Caco-2 (cell line): ENCODE measurements at regions of chr1 and their contacts with region 1.

Region 1: GRCh38 chr1:151399890-151400495 is 620 bp downstream of the PSMB4 start:
- DNase-seq: no peak
- H3K4me3 ChIP-seq: peak overlapping the region; percentile 80
- H3K4me3 Mint-ChIP-seq: peak overlapping the region; percentile 99
- H3K27ac Mint-ChIP-seq: peak overlapping the region; percentile 99
- H3K4me1 ChIP-seq: peaks cover 7% of the 10 kb centered on the region
- H3K4me1 Mint-ChIP-seq: peaks cover 13% of the 10 kb centered on the region
- H3K27me3 ChIP-seq: no peaks in the 10 kb centered on the region
- H3K27me3 Mint-ChIP-seq: no peaks in the 10 kb centered on the region
- CTCF ChIP-seq: no peak

Region 2: GRCh38 chr1:151175910-151176309 is 224.1 kb before region 1 on chr1 and contains the start of gene TMOD4:
- CTCF ChIA-PET with region 1: no interaction called
- POLR2A ChIA-PET with region 1: no interaction called
- intact Hi-C with region 1: no loop called
- DNase-seq: peak in 1 of 2 experiments; percentile 13
- H3K4me3 ChIP-seq: no peak within 1 kb of the TSS
- H3K4me3 Mint-ChIP-seq: no peak within 1 kb of the TSS
- H3K27ac Mint-ChIP-seq: no peak within 1 kb of the TSS
- H3K4me1 ChIP-seq: no peaks in the 10 kb centered on the region
- H3K4me1 Mint-ChIP-seq: no peaks in the 10 kb centered on the region
- H3K27me3 ChIP-seq: no peaks in the 10 kb centered on the region
- H3K27me3 Mint-ChIP-seq: no peaks in the 10 kb centered on the region
- CTCF ChIP-seq: peak; percentile 57 to 67
- total RNA-seq, gene TMOD4: 0.84 and 1.3 TPM in 2 replicates

Region 3: DNA sequence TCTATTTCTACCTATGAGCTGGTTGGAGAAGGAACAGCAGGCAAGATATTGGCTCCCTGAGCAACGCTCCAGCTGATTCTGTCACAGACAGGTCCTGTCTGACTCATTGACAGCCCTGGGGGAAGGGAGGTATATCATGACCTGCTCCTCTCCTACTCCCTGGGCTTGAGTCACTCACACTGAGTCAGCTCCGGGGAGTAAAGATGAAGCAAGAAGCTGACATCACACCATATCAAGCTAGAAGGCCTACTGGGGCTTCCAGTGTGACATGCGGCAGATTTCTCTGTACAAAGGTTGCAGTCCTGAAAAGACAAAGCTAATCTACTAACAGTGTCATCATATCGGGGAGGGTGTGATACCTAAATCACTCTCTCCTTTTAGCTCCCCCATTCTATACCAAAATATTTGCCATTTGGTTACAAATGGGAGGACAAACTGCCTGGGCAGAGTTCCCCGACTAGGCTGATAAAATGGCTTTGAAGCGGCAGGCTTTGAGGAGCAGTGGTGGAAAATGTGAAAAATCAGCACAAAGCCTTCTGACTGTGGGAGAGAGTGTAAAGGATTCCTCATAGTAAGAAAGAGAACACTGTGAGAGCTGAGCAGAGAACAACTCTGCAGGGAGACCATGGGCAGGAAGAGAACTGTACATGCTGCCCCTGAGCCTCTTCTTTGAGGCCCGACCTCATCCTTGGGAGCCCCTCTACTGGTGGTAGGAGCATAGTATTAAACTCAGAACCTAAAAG is 88.2 kb before region 1 on chr1:
- CTCF ChIA-PET with region 1: no interaction called
- POLR2A ChIA-PET with region 1: interaction called, 3 read pairs
- intact Hi-C with region 1: loop called (anchors 10 kb)
- DNase-seq: peak; percentile 83 to 89
- H3K4me3 ChIP-seq: no peak overlapping the region
- H3K4me3 Mint-ChIP-seq: no peak overlapping the region
- H3K27ac Mint-ChIP-seq: peak overlapping the region; percentile 78
- H3K4me1 ChIP-seq: peaks cover 67% of the 10 kb centered on the region
- H3K4me1 Mint-ChIP-seq: peaks cover 43% of the 10 kb centered on the region
- H3K27me3 ChIP-seq: no peaks in the 10 kb centered on the region
- H3K27me3 Mint-ChIP-seq: no peaks in the 10 kb centered on the region
- CTCF ChIP-seq: no peak

Region 4: DNA sequence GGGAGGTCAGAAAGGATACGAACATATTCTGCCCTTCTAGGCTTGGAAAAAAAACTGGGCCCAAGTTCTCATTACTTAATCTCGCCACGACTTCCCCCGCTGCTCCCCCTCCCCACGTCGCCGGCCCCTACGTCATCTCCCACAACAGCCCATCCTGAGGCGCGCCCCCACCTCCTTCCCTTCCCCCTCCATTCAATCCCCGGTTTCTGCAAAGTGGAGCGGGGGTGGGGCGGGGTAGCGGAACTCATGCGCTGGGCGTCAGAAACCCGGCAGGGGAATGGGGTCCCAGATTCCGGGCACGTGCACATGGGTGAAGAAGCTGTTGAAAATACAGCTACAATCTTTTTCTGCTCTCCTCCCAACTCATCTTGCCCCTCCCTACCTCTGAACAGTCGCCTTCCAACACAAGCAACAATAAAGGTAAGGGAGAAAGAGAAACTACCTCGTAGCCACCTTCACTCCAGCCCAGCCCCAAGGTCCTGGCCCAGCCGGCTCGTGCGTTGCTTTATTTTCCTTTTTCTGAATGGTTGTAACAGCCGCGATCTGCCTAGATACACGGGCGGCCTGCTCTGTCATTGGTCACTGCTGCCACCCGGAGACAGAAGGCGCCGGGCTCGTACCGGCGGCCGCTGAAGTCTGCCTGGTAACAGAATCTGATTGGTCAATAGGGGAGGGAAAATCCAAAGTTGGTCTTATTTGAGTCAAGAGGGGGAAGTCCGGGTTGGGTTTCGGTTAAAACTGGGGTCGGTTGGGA is 53.0 kb before region 1 on chr1 and contains the start of gene RFX5:
- CTCF ChIA-PET with region 1: no interaction called
- POLR2A ChIA-PET with region 1: no interaction called
- intact Hi-C with region 1: loop called (anchors 10 kb)
- DNase-seq: peak; percentile 94 to 96
- H3K4me3 ChIP-seq: peak within 1 kb of the TSS; percentile 45
- H3K4me3 Mint-ChIP-seq: peak within 1 kb of the TSS; percentile 93
- H3K27ac Mint-ChIP-seq: peak within 1 kb of the TSS; percentile 95
- H3K4me1 ChIP-seq: peaks cover 6% of the 10 kb centered on the region; the same call in 1 of the 2 replicates
- H3K4me1 Mint-ChIP-seq: peaks cover 18% of the 10 kb centered on the region
- H3K27me3 ChIP-seq: no peaks in the 10 kb centered on the region
- H3K27me3 Mint-ChIP-seq: no peaks in the 10 kb centered on the region
- CTCF ChIP-seq: no peak
- total RNA-seq, gene RFX5: 23.3 and 25.0 TPM in 2 replicates